ENCODE measurements at regions of chr10 and their contacts with region 1.

Region 1: GRCh38 chr10:102555781-102556328 is 52.1 kb downstream of the SUFU start:
- DNase-seq: peak in 8 of 10 donors; percentile 16 to 87 (median 40)

Region 2: GRCh38 chr10:102322914-102323313 is 232.9 kb before region 1 on chr10:
- intact Hi-C with region 1: no loop called
- DNase-seq: no peak

Region 3: GRCh38 chr10:102945449-102946361 is 389.9 kb after region 1 on chr10:
- intact Hi-C with region 1: loop called (anchors 5 kb)
- DNase-seq: no peak